Breast epithelium (tissue), 4 donors: ENCODE measurements at regions of chr3 and their contacts with region 1.

Region 1: DNA sequence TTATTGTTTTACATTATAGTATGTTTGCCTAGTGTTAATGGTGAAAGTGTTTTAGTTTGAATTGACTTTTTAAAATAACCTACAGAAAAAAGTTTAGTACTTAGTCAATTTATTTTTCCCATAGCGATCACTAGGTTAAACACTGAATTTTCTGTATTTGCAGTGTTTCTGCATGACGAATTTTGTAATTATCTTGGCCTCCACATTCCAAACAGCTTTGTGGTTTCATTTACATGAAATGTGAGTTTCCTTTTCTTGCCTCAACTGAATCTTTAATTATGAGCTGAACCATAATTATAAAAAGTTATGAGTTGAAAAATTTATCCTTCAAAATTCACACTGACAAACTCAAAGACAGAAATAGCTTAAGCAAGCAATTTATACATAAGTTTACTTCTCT is 235.5 kb downstream of the CTNNB1 start:
- DNase-seq: no peak
- H3K4me3 ChIP-seq: no peak overlapping the region
- H3K27ac ChIP-seq: no peak overlapping the region
- H3K4me1 ChIP-seq: no peaks in the 10 kb centered on the region
- H3K27me3 ChIP-seq: no peaks in the 10 kb centered on the region
- CTCF ChIP-seq: no peak
- POLR2A ChIP-seq: no peak

Region 2: GRCh38 chr3:41075975-41076374 is 358.8 kb before region 1 on chr3:
- intact Hi-C with region 1: no loop called
- DNase-seq: no peak
- H3K4me3 ChIP-seq: no peak overlapping the region
- H3K27ac ChIP-seq: no peak overlapping the region
- H3K4me1 ChIP-seq: no peaks in the 10 kb centered on the region
- H3K27me3 ChIP-seq: no peaks in the 10 kb centered on the region
- CTCF ChIP-seq: no peak
- POLR2A ChIP-seq: no peak

Region 3: DNA sequence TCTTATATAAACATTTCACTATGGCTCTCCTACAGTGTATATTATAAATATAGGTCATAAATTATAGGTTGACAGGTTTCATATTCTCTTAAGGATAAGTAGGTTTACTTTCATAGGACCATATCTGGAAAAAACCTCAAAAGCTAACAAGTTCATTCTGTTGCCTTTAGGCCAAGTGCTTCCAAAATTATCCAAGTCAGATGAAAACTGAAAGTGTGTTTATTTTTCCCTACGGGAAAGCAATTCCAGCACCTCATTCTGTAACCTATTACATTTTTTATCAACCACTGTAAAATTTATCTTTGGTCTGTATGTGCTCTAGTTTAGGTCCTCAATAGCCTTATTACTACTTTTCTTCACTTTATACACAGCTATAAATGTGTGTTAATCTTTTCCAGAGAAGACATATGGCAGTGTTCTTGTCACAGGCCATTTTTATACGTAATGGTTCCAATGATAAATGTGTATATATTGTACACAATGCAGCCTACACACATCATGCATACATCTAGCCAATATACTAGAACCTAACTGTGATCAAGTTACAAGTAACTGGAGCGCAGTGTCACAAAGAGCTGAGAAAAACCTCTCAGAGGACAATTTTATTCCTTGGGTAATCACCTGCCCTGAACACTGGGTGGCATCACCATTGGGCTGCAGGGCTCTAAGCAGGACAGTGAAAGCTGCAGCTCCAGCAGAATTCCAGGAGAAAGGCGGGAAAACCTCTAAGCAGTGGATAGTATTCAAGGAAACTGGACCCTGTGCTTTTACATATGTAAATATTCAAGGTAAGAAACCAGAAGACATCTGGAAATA is 15.8 kb after region 1 on chr3:
- intact Hi-C with region 1: no loop called
- DNase-seq: no peak
- H3K4me3 ChIP-seq: no peak overlapping the region
- H3K27ac ChIP-seq: no peak overlapping the region
- H3K4me1 ChIP-seq: no peaks in the 10 kb centered on the region
- H3K27me3 ChIP-seq: no peaks in the 10 kb centered on the region
- CTCF ChIP-seq: no peak
- POLR2A ChIP-seq: no peak

Region 4: DNA sequence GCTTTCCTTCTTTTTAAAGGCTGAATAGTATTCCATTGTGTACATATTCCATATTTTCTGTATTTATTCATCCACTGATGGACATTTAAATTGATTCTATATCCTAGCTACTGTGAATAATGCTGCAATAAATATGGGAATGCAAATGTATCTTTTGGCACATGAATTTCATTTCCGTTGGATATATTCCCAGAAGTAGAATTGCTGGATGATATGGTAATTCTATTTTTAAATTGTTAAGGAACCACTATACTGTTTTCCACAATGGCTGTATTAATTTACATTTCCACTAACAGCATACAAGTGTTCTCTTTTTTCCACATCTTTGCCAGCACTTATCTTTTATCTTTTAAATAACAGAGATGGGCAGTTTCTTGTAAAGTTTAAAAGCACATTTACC is 67.2 kb after region 1 on chr3:
- intact Hi-C with region 1: loop called (anchors 2 kb)
- DNase-seq: no peak
- H3K4me3 ChIP-seq: no peak overlapping the region
- H3K27ac ChIP-seq: no peak overlapping the region
- H3K4me1 ChIP-seq: no peaks in the 10 kb centered on the region
- H3K27me3 ChIP-seq: no peaks in the 10 kb centered on the region
- CTCF ChIP-seq: no peak
- POLR2A ChIP-seq: no peak

Region 5: GRCh38 chr3:42118762-42119361 is 684.1 kb after region 1 on chr3:
- intact Hi-C with region 1: no loop called
- DNase-seq: peak in 1 of 2 donors; percentile 48
- H3K4me3 ChIP-seq: no peak overlapping the region
- H3K27ac ChIP-seq: peak overlapping the region; percentile 49 to 81
- H3K4me1 ChIP-seq: peaks cover 9 to 38% of the 10 kb centered on the region in 2 donors
- H3K27me3 ChIP-seq: no peaks in the 10 kb centered on the region
- CTCF ChIP-seq: peak in 2 of 3 donors; percentile 40 to 57
- POLR2A ChIP-seq: no peak